ENCODE measurements at regions of chr16 and their contacts with region 1.

Region 1: GRCh38 chr16:75555707-75556430 is at the start of gene TMEM231:
- DNase-seq: peak; percentile 94
- ATAC-seq: peak; percentile 96
- H3K4me3 Mint-ChIP-seq: peak within 1 kb of the TSS; percentile 90
- H3K27ac Mint-ChIP-seq: peak within 1 kb of the TSS; percentile 83
- H3K4me1 Mint-ChIP-seq: peaks cover 5% of the 10 kb centered on the region
- H3K27me3 Mint-ChIP-seq: peaks cover 23% of the 10 kb centered on the region
- total RNA-seq, gene TMEM231: 2.8 to 3.4 TPM

Region 2: DNA sequence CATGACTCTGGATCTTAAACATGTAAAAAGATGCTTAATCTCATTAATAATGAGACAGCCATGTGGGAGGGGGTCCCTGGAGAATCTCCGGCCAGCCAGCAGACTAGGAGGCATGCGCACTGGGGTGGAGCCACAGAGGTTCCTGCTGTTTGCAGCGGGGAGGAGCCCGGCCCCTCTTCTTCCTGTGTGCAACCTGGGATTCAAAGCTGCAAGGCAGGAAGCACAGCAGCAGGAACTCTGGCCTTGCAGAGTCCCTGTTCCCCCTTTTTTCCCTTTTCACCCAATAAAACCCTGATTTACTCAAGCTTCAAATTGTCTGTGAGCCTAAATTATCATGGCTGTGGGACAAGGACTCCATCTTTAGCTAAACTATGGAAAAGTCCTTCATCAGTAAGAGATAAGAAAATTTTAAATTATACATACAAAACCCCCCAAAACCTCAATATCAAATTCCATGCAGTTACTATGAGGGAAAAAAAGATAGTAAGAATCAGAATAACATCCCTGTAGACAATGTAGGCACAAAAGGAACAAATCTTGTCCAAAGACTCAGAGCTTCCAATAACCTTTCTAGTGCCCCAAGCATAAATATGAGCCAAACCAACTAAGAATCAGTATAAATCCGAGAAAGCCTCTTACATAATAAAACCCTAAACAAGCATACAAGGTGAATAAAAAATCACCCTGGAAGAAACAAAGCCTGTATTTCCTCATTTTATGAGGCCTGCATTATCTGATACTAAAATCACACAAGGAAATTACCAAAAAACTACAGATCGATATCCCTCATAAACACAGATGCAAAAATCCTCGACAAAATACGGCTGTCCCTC is 134.7 kb before region 1 on chr16:
- POLR2A ChIA-PET with region 1: no interaction called
- DNase-seq: peak; percentile 39
- ATAC-seq: peak; percentile 74
- H3K4me3 Mint-ChIP-seq: peak overlapping the region; percentile 68
- H3K27ac Mint-ChIP-seq: peak overlapping the region; percentile 52
- H3K4me1 Mint-ChIP-seq: peaks cover 15% of the 10 kb centered on the region
- H3K27me3 Mint-ChIP-seq: no peaks in the 10 kb centered on the region

Region 3: GRCh38 chr16:75519881-75520280 is 36.0 kb before region 1 on chr16:
- POLR2A ChIA-PET with region 1: interaction called, 10 read pairs
- DNase-seq: no peak
- ATAC-seq: no peak
- H3K4me3 Mint-ChIP-seq: no peak overlapping the region
- H3K27ac Mint-ChIP-seq: no peak overlapping the region
- H3K4me1 Mint-ChIP-seq: peaks cover 8% of the 10 kb centered on the region
- H3K27me3 Mint-ChIP-seq: peaks cover 3% of the 10 kb centered on the region

Region 4: GRCh38 chr16:75566040-75566810 is 10.4 kb after region 1 on chr16 and contains the start of gene GABARAPL2:
- POLR2A ChIA-PET with region 1: interaction called, 19 read pairs
- DNase-seq: peak; percentile 98
- ATAC-seq: peak; percentile 76
- H3K4me3 Mint-ChIP-seq: peak within 1 kb of the TSS; percentile 93
- H3K27ac Mint-ChIP-seq: peak within 1 kb of the TSS; percentile 91
- H3K4me1 Mint-ChIP-seq: peaks cover 18% of the 10 kb centered on the region
- H3K27me3 Mint-ChIP-seq: peaks cover 19% of the 10 kb centered on the region
- total RNA-seq, gene GABARAPL2: 71.6 to 72.9 TPM

Measured in activated naive CD8-positive, alpha-beta T cell treated with anti-CD3 and anti-CD28 coated beads, Interleukin-2, amount 10 ng/mL, durations not matched to agents 7 days and 5 days (primary cell).